Psoas muscle (tissue), 8 donors: ENCODE measurements at regions of chr7 and their contacts with region 1.

Region 1: DNA sequence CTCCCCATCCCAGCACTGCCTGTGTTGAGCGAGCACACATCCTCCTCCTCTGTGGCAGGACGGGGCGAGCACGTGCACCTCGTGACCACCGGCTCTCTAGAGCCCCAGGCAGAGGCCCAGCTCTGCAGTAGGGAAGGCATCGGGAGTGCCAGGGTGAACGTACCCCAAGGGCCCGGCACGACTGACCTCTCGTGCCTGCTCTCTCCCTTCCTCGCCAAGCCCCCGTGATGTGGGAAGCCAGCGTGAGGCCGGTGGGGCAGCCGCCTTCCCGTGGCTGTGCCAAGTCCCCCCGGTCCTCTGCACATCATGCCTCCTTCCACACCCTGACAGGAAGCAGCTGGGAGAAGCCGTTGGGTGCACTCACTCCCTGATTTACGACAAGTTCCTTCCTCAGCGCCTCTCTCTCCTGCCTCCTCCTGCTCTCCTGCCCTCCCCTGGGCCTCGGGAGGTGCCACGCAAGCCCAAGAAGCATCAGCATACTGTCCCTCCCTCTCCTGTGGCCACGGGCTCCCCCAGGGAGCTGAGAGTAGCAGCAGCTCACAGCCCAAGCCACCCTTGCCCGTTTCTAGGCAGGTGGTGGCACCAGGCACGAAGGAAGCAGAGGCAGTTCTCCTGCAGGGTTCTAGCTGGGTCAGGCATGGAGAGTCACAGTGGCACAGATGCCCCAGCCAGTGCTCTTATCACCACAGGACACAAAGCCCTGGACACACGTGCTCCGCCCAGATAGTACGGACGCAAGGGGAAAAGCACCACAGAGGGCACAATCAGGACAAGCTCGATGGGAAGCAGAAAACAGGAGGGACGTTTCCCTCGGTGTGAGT is 47.0 kb downstream of the AMZ1 start:
- DNase-seq: no peak
- ATAC-seq: no peak
- H3K4me3 ChIP-seq: no peak overlapping the region
- H3K27ac ChIP-seq: peak overlapping the region; percentile 36
- H3K4me1 ChIP-seq: peaks cover 48% of the 10 kb centered on the region
- H3K27me3 ChIP-seq: no peaks in the 10 kb centered on the region
- CTCF ChIP-seq: no peak

Region 2: GRCh38 chr7:2844165-2844898 is 109.4 kb after region 1 on chr7 and contains the start of gene GNA12:
- intact Hi-C with region 1: loop called in 1 of 2 experiments (anchors 5 kb)
- DNase-seq: peak; percentile 99
- ATAC-seq: peak; percentile 98 to 99 (median 99)
- H3K4me3 ChIP-seq: peak within 1 kb of the TSS; percentile 80
- H3K27ac ChIP-seq: peak within 1 kb of the TSS; percentile 80
- H3K4me1 ChIP-seq: peaks cover 22% of the 10 kb centered on the region
- H3K27me3 ChIP-seq: no peaks in the 10 kb centered on the region
- CTCF ChIP-seq: no peak
- total RNA-seq, gene GNA12: 14.6 to 20.2 (median 15.0) TPM

Region 3: DNA sequence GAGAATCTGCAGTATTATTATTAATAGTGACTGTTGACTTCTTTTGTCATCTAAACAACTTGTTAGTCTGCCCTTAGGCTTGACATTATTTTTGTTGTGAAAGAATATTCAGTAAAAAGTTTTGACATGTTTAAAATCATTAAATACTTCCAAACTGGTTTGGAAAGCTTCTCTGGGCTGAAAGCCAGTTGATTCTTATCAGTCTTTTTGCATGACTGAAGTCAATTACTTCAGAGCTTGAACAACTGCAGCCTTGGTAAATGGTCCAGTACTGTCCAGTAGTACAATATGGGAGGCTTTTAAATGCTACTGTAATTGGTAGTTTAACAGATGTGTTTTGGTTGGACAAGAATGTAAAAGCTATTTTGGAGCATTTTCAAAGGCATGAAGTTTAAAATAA is 669.5 kb after region 1 on chr7:
- intact Hi-C with region 1: no loop called
- DNase-seq: no peak
- ATAC-seq: no peak
- H3K4me3 ChIP-seq: no peak overlapping the region
- H3K27ac ChIP-seq: no peak overlapping the region
- H3K4me1 ChIP-seq: no peaks in the 10 kb centered on the region
- H3K27me3 ChIP-seq: no peaks in the 10 kb centered on the region
- CTCF ChIP-seq: no peak